IMR-90 (cell line): ENCODE measurements at regions of chr14 and their contacts with region 1.

Region 1: DNA sequence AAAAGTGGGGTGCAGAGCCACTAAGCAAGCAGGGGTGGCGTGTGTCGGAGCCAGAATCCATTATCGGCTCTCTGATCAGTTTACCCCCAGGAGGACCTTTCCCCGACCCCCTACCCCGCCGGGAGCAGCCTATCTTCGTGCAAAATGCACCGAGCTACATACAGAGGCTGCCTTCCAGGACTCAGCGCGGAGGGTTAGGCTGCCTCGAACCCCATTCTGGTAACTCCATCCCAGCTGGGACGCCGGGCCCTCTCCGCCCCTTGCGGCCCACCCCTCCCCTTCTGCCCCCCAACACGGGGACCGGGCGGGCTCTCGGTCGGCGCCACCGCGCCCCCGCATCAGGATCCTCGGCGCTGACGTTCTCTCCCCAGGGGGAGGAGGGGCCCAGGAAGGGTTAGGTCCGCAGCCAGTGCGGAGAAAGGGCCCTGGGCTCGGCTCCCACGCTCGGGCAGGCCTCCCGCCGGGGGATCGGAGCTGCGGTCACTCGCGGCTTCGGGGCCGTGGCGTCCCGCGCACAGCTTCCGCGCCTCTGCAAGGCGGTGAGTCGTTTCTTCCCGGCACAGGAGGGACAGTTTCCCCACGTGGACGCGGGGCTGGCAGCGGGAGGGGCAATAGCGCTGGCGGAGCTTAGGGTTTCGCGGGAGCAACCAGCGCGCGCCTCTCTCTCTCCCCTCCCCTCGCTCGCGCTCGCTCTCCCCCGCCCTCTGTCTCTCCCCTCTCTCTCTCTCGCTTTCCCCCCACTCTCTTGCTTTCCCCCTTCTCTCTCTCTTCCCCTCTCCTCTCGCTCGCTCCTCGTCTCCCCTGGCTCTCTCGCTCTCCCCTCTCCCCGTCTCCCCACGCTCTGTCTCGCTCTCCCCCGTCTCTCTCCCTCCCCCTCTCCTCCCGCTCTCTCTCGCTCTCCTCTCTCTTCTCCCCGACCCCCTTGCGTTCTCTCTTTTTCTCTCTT is 12.5 kb upstream of the MAP3K9 start:
- DNase-seq: peak; percentile 35
- ATAC-seq: peak; percentile 59
- H3K4me3 ChIP-seq: peak overlapping the region; percentile 92
- H3K27ac ChIP-seq: peak overlapping the region; percentile 22; the same call in 1 of the 2 replicates
- H3K4me1 ChIP-seq: no peaks in the 10 kb centered on the region
- H3K27me3 ChIP-seq: peaks cover 4% of the 10 kb centered on the region; the same call in 1 of the 2 replicates
- CTCF ChIP-seq: no peak
- POLR2A ChIP-seq: peak; percentile 51; the same call in 1 of the 2 replicates
- RAD21 ChIP-seq: no peak

Region 2: DNA sequence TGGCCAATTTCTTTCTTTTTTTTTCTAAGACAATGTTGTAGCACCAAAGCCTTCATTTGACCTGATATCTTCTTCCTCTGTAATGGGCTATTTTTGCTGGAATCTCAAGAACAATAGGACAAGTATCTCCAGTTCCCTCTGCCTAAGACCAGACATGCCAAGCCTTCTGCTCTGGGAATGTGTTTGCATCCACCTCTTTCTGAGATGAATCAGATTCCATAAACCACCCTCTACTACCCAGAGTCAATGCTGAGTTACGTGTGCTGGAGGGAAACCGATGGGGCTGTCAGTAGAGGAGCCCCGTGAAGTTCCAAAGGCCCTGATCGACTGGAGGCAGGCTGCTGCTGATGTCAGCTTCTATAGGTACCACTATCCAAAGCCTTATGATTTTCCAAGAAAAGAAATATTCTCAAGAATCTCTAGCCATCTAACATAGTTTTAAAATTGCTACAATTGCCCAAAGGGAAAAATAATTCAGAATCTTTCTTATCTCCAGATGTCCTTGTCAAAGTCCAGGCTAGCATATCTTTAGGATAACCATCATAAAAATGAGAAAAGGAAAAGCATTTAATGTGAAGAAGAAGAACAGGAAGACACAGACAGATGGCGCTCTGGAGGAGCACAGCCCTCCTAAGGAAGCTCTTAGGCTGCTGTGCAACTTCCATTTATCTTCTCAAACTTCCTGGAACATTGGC is 735.0 kb before region 1 on chr14:
- CTCF ChIA-PET with region 1: no interaction called
- POLR2A ChIA-PET with region 1: no interaction called
- dilution Hi-C with region 1: no loop called
- in situ Hi-C with region 1: no loop called
- intact Hi-C with region 1: loop called (anchors 1 kb)
- DNase-seq: peak; percentile 54
- ATAC-seq: peak; percentile 60
- H3K4me3 ChIP-seq: no peak overlapping the region
- H3K27ac ChIP-seq: no peak overlapping the region
- H3K4me1 ChIP-seq: no peaks in the 10 kb centered on the region
- H3K27me3 ChIP-seq: no peaks in the 10 kb centered on the region
- CTCF ChIP-seq: peak; percentile 61
- POLR2A ChIP-seq: no peak
- RAD21 ChIP-seq: peak; percentile 57

Region 3: GRCh38 chr14:70622111-70622712 is 199.6 kb before region 1 on chr14:
- CTCF ChIA-PET with region 1: no interaction called
- POLR2A ChIA-PET with region 1: no interaction called
- dilution Hi-C with region 1: no loop called
- in situ Hi-C with region 1: no loop called
- intact Hi-C with region 1: loop called (anchors 1 kb)
- DNase-seq: peak; percentile 21
- ATAC-seq: peak; percentile 63; the same call in 1 of the 2 replicates
- H3K4me3 ChIP-seq: no peak overlapping the region
- H3K27ac ChIP-seq: no peak overlapping the region
- H3K4me1 ChIP-seq: no peaks in the 10 kb centered on the region
- H3K27me3 ChIP-seq: peaks cover 2% of the 10 kb centered on the region; the same call in 1 of the 2 replicates
- CTCF ChIP-seq: peak; percentile 56
- POLR2A ChIP-seq: no peak
- RAD21 ChIP-seq: peak; percentile 63

Region 4: GRCh38 chr14:70972107-70972976 is 150.5 kb after region 1 on chr14:
- CTCF ChIA-PET with region 1: interaction called, 5 read pairs
- POLR2A ChIA-PET with region 1: no interaction called
- dilution Hi-C with region 1: no loop called
- in situ Hi-C with region 1: loop called (anchors 5 kb)
- intact Hi-C with region 1: loop called (anchors 1 kb)
- DNase-seq: peak; percentile 88
- ATAC-seq: peak; percentile 90
- H3K4me3 ChIP-seq: no peak overlapping the region
- H3K27ac ChIP-seq: no peak overlapping the region
- H3K4me1 ChIP-seq: peaks cover 2% of the 10 kb centered on the region; the same call in 1 of the 2 replicates
- H3K27me3 ChIP-seq: no peaks in the 10 kb centered on the region
- CTCF ChIP-seq: peak; percentile 91
- POLR2A ChIP-seq: peak; percentile 22; the same call in 1 of the 2 replicates
- RAD21 ChIP-seq: peak; percentile 90